ENCODE measurements at regions of chr7 and their contacts with region 1.

Region 1: GRCh38 chr7:119935418-119936025 is 337.5 kb upstream of the KCND2 start:
- DNase-seq: peak; percentile 51
- H3K4me3 ChIP-seq: no peak overlapping the region
- H3K27ac ChIP-seq: no peak overlapping the region
- H3K4me1 ChIP-seq: no peaks in the 10 kb centered on the region
- H3K27me3 ChIP-seq: no peaks in the 10 kb centered on the region
- CTCF ChIP-seq: peak; percentile 17 to 21
- POLR2A ChIP-seq: no peak

Region 2: GRCh38 chr7:119270045-119270464 is 665.5 kb before region 1 on chr7:
- CTCF ChIA-PET with region 1: interaction called, 4 read pairs
- POLR2A ChIA-PET with region 1: no interaction called
- dilution Hi-C with region 1: no loop called
- intact Hi-C with region 1: loop called (anchors 1 kb)
- DNase-seq: peak; percentile 49
- H3K4me3 ChIP-seq: no peak overlapping the region
- H3K27ac ChIP-seq: no peak overlapping the region
- H3K4me1 ChIP-seq: no peaks in the 10 kb centered on the region
- H3K27me3 ChIP-seq: no peaks in the 10 kb centered on the region
- CTCF ChIP-seq: peak; percentile 78 to 83
- POLR2A ChIP-seq: no peak

Region 3: GRCh38 chr7:119919986-119920385 is 15.5 kb before region 1 on chr7:
- CTCF ChIA-PET with region 1: interaction called, 26 read pairs
- POLR2A ChIA-PET with region 1: no interaction called
- dilution Hi-C with region 1: no loop called
- intact Hi-C with region 1: no loop called
- DNase-seq: no peak
- H3K4me3 ChIP-seq: no peak overlapping the region
- H3K27ac ChIP-seq: no peak overlapping the region
- H3K4me1 ChIP-seq: no peaks in the 10 kb centered on the region
- H3K27me3 ChIP-seq: no peaks in the 10 kb centered on the region
- CTCF ChIP-seq: no peak
- POLR2A ChIP-seq: no peak

Region 4: DNA sequence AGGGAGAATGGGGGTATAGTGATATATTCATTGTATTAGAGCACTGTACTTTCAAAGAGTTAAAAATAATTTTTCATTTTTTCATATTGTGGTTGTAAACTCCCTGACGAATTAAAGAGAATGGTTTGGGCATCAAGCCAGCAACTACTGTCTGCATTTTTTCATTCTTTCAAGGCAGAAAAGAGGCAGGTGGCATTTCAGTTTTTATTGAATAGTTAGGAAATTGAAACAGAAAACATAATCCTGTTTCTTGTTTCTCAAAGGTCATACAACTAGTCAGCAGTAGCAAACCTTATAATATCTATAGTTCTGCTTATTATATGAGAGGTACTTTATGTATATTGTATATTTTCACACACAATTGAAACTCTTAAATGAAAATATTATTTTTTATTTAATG is 33.5 kb after region 1 on chr7:
- CTCF ChIA-PET with region 1: interaction called, 27 read pairs
- POLR2A ChIA-PET with region 1: no interaction called
- dilution Hi-C with region 1: no loop called
- intact Hi-C with region 1: no loop called
- DNase-seq: no peak
- H3K4me3 ChIP-seq: no peak overlapping the region
- H3K27ac ChIP-seq: no peak overlapping the region
- H3K4me1 ChIP-seq: no peaks in the 10 kb centered on the region
- H3K27me3 ChIP-seq: no peaks in the 10 kb centered on the region
- CTCF ChIP-seq: no peak
- POLR2A ChIP-seq: no peak

Region 5: GRCh38 chr7:120123528-120123927 is 188.0 kb after region 1 on chr7:
- CTCF ChIA-PET with region 1: no interaction called
- POLR2A ChIA-PET with region 1: no interaction called
- dilution Hi-C with region 1: no loop called
- intact Hi-C with region 1: no loop called
- DNase-seq: no peak
- H3K4me3 ChIP-seq: no peak overlapping the region
- H3K27ac ChIP-seq: no peak overlapping the region
- H3K4me1 ChIP-seq: no peaks in the 10 kb centered on the region
- H3K27me3 ChIP-seq: no peaks in the 10 kb centered on the region
- CTCF ChIP-seq: no peak
- POLR2A ChIP-seq: no peak

Region 6: DNA sequence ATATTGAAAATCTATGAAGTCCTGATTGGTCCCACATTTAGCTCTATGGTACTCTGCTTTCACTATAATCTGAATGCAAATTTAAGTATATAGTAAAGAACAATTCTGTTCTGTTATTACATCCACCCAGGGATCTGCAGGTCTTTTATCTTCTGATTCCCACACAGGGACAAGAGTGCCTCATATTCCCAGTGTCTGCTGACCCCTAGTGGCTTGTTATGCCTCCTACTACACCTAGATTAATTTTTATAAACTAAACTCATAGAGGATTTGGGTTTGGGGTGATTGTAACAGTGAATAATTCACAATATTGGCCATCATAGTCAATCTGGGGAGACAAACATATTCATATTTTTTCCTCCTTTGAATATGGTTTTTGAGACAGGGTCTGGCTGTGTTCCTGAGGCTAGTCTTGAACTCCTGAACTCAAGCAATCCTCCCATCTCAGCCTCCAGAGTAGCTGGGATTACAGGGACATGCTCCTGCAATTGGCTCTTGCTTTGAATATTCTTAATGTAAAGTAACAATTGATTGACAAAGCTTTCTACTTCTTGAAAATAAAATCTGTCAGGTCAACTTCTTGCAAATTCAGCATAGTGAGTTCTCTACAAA is 619.5 kb after region 1 on chr7:
- CTCF ChIA-PET with region 1: interaction called, 106 read pairs
- POLR2A ChIA-PET with region 1: no interaction called
- dilution Hi-C with region 1: no loop called
- intact Hi-C with region 1: loop called (anchors 1 kb)
- DNase-seq: peak; percentile 60
- H3K4me3 ChIP-seq: no peak overlapping the region
- H3K27ac ChIP-seq: no peak overlapping the region
- H3K4me1 ChIP-seq: no peaks in the 10 kb centered on the region
- H3K27me3 ChIP-seq: peaks cover 0 to 7% of the 10 kb centered on the region in 2 experiments
- CTCF ChIP-seq: peak; percentile 57 to 59
- POLR2A ChIP-seq: no peak

Measured in endothelial cell of umbilical vein (primary cell).